Activated CD4-positive, alpha-beta memory T cell treated with anti-CD3 and anti-CD28 coated beads, Interleukin-2, amount 10 ng/mL, durations not matched to agents 7 days and 5 days (primary cell): ENCODE measurements at regions of chr15 and their contacts with region 1.

Region 1: DNA sequence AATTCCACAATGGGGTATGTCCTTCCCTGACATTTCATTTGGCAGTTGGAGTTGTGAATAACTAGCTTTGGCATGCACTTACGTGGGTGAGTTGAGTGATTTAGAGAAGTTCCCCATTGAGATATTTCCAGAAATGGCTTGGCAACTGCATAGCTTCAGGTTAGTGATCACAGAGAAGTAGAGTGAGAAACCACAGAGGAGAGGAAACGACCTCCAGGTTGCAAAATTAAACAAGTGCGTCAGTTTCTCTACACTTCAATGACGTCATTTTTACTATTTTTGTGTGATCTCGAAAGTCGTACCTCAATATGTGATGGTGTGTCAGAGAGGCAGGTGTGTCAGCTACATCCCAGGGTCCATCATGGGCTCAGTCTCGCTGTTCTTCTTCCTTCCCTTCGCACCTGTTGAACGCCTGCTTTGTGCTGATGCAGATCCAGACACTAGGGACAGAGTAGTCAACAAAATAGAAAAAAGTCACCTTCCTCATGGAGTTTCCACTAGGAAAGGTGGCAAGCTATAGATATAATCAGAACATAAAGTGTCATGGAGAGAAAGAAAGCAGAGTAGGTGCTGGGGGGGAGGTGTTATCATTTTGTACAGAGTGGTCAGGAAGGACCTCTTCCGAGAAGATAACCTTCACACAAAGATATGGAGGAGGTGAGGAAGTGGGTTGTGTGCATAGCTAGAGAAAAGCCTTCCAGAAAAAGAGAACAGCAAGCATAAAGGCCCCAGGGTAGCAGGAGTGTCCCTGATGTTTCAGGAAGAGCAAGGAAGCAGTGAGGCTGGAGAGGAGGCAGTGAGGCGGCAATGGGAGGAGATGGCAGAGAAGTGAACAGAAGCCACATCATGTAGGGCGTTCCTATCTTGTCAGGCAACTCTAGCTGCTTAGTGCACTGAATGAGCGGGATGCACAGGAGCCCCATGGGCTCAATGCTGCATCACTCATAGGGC is 75.6 kb downstream of the MCTP2 start:
- DNase-seq: no peak
- H3K4me3 Mint-ChIP-seq: peak overlapping the region; percentile 15
- H3K27ac Mint-ChIP-seq: peak overlapping the region; percentile 83
- H3K4me1 Mint-ChIP-seq: peaks cover 62% of the 10 kb centered on the region
- H3K27me3 Mint-ChIP-seq: no peaks in the 10 kb centered on the region

Region 2: DNA sequence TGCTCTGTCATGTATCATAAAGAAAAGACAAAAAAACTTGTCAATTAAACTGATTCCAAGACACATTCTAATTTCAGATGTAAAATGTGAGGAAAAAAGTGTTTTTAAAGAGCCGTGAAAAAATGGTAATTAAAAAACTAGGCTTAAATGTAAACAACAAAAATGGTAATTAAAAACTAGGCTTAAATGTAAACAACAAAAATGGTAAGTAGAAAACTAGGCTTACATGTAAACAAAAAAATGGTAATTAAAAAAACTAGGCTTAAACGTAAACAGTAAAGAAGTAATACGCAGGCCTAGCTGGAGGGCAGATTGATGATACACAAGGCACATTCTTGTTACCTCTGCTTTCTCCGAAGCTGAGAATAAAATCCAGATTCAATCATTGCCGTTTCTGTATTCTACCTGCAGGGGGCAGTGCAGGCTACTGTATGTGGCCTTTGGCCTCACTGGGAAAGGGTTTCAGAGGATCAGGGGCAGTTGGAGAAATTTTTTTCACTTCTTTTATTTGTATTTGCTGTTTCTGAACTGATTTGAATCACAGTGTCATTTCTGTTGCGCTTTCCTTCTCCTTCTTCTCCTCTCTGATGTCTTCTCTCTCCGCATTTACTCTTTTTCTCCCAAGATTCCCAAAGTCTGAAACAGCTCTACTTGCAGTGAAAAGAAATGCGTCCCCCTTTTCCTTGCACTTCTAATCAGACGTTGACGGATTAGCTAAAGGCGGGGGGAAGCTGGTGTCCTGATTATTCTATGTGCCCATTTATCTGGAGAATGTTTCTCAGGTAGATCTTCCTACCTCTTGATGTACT is 142.8 kb before region 1 on chr15:
- CTCF ChIA-PET with region 1: interaction called, 18 read pairs
- POLR2A ChIA-PET with region 1: no interaction called
- DNase-seq: peak; percentile 69
- H3K4me3 Mint-ChIP-seq: no peak overlapping the region
- H3K27ac Mint-ChIP-seq: no peak overlapping the region
- H3K4me1 Mint-ChIP-seq: peaks cover 9% of the 10 kb centered on the region
- H3K27me3 Mint-ChIP-seq: peaks cover 11% of the 10 kb centered on the region

Region 3: GRCh38 chr15:94287794-94288246 is 19.2 kb before region 1 on chr15:
- CTCF ChIA-PET with region 1: interaction called, 7 read pairs
- POLR2A ChIA-PET with region 1: interaction called, 29 read pairs
- DNase-seq: peak; percentile 74
- H3K4me3 Mint-ChIP-seq: peak overlapping the region; percentile 63
- H3K27ac Mint-ChIP-seq: peak overlapping the region; percentile 85
- H3K4me1 Mint-ChIP-seq: peaks cover 51% of the 10 kb centered on the region
- H3K27me3 Mint-ChIP-seq: no peaks in the 10 kb centered on the region

Region 4: GRCh38 chr15:94441760-94442159 is 134.8 kb after region 1 on chr15:
- CTCF ChIA-PET with region 1: no interaction called
- POLR2A ChIA-PET with region 1: no interaction called
- DNase-seq: no peak
- H3K4me3 Mint-ChIP-seq: no peak overlapping the region
- H3K27ac Mint-ChIP-seq: no peak overlapping the region
- H3K4me1 Mint-ChIP-seq: no peaks in the 10 kb centered on the region
- H3K27me3 Mint-ChIP-seq: no peaks in the 10 kb centered on the region